Mammary epithelial cell (primary cell): ENCODE measurements at regions of chr14 and their contacts with region 1.

Region 1: GRCh38 chr14:63437953-63438757 is 105.0 kb downstream of the PPP2R5E start:
- DNase-seq: peak; percentile 95
- H3K4me3 ChIP-seq: peak overlapping the region in 2 of 3 experiments; percentile 12 to 36
- H3K27ac ChIP-seq: peak overlapping the region; percentile 48
- H3K4me1 ChIP-seq: peaks cover 13% of the 10 kb centered on the region
- H3K27me3 ChIP-seq: no peaks in the 10 kb centered on the region
- CTCF ChIP-seq: peak in 1 of 2 donors; percentile 18

Region 2: GRCh38 chr14:63499701-63500250 is 61.6 kb after region 1 on chr14:
- CTCF ChIA-PET with region 1: no interaction called
- dilution Hi-C with region 1: loop called (anchors 5 kb)
- in situ Hi-C with region 1: no loop called
- intact Hi-C with region 1: no loop called
- DNase-seq: no peak
- H3K4me3 ChIP-seq: no peak overlapping the region
- H3K27ac ChIP-seq: no peak overlapping the region
- H3K4me1 ChIP-seq: peaks cover 4% of the 10 kb centered on the region
- H3K27me3 ChIP-seq: no peaks in the 10 kb centered on the region
- CTCF ChIP-seq: no peak